GM10248 (cell line): ENCODE measurements at regions of chr9 and their contacts with region 1.

Region 1: GRCh38 chr9:69193685-69194032 is 19.6 kb downstream of the TJP2 start:
- DNase-seq: no peak
- CTCF ChIP-seq: no peak

Region 2: GRCh38 chr9:69035438-69036308 is 158.0 kb before region 1 on chr9 and contains the start of gene FXN:
- CTCF ChIA-PET with region 1: interaction called, 31 read pairs
- POLR2A ChIA-PET with region 1: no interaction called
- DNase-seq: peak; percentile 93
- CTCF ChIP-seq: peak; percentile 98

Region 3: DNA sequence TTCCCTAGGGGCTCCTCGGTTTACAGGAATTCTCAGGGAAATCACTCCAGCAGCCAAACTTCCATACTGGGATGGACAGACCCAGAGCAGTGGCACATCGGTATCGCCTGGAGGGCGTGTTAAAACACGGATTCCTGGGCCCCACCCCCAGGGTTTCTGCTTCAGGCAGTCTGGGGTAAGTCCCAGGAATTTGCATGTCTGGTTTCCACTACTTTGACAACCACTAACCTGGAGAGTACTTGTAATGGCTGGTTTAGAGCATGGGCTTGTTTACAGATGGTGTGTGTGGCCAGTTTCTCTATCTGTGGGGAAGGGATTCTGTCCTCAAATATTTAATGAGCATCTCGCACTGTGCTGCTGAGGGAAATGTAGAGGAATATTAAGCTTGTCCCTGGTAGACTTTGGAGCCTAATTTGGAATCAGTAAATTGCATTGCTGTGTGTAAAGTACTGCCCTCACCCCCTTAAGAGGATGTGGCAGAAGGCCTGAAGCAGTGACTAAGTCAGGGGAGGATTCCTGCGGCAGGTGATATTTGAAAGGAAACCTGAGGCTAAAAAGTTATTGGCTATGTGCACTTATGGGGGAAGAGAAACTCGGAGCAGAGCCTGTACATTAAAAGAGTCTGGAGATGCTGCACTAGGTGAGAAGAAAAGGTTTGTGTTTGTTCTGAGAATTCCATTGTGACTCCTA is 38.2 kb before region 1 on chr9:
- CTCF ChIA-PET with region 1: interaction called, 13 read pairs
- POLR2A ChIA-PET with region 1: no interaction called
- DNase-seq: peak; percentile 65
- CTCF ChIP-seq: no peak

Region 4: DNA sequence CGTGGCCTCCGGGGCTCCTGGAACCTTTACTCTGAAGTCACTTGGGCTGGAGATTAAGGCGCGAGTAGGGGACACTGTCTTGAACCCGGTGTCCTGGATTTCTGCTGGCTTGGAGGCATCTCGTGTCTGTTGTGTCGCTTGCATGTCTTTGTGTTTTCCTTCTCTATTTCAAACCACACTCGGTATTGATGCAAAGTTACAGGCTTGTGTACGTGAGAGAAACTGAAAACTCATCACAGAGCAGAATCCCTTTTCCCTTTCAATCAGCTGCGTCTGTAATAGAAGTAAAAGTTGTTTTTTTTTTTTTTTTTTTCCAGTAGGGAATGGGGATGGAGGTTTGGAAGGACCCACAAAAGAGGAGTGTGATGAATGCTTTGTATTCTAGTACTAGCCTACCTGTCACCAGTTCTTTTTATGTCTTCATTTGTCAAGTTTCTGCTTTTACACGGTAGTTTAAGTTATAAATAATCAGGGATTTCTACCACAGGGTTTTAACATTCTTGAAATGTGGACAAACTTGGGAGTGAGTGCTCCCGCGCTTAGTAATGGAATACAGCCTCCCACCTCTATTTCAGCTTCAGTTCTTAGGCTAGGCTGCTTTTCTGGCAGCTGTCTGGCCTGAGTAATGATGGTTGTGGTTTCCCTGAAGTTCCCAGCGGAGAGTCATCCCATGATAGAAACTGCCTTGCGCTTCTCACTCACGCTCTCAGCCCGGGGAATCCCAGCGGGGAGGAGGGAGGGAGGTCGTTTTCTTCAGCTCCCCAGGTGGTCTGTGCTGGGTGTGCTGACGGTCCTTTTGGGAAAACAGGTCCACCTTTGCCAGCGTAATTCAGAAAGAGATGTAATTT is 18.8 kb before region 1 on chr9:
- CTCF ChIA-PET with region 1: interaction called, 67 read pairs
- POLR2A ChIA-PET with region 1: interaction called, 5 read pairs
- DNase-seq: peak; percentile 71
- CTCF ChIP-seq: no peak

Region 5: GRCh38 chr9:69211424-69212036 is 17.9 kb after region 1 on chr9:
- CTCF ChIA-PET with region 1: interaction called, 17 read pairs
- POLR2A ChIA-PET with region 1: no interaction called
- DNase-seq: no peak
- CTCF ChIP-seq: no peak

Region 6: GRCh38 chr9:69253057-69253456 is 59.4 kb after region 1 on chr9:
- CTCF ChIA-PET with region 1: no interaction called
- POLR2A ChIA-PET with region 1: no interaction called
- DNase-seq: no peak
- CTCF ChIP-seq: no peak

Region 7: DNA sequence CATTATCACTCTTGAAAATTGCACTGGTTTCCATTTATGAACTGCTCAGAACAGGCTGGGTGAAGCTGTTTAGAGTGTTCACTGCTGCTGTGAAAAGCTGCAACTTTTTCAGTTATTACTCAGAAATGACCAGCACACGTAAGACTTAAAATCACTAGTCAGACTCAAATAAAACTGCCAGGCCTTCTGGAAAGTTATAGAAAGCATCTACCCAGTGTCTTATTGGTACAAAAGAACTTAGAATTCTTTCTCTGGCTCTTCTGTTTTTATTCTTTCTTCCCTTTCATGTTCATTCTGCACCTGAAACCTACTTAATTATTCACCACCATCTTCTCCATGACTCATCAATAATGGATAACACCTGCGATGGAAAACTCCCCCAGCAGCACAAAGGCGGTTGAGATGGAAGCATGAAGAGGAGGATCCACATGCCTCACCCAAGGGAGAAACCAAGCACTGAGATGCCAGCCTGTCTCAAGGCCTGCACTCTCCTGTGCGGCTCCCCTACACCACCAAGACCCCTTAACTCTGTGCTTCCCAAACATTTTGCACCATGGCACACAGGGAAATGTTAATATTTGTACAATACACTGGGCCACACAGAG is 303.3 kb after region 1 on chr9:
- CTCF ChIA-PET with region 1: no interaction called
- POLR2A ChIA-PET with region 1: no interaction called
- DNase-seq: no peak
- CTCF ChIP-seq: no peak